CD4-positive, alpha-beta memory T cell (primary cell): ENCODE measurements at regions of chrX and their contacts with region 1.

Region 1: GRCh38 chrX:41781502-41781901 is 57.5 kb downstream of the GPR82 start:
- DNase-seq: peak in 4 of 5 donors; percentile 28 to 38 (median 32)
- H3K4me3 ChIP-seq: no peak overlapping the region
- H3K4me3 Mint-ChIP-seq: no peak overlapping the region
- H3K27ac ChIP-seq: no peak overlapping the region
- H3K27ac Mint-ChIP-seq: peak overlapping the region in 2 of 7 donors; percentile 2 to 7
- H3K4me1 ChIP-seq: peaks cover 12% of the 10 kb centered on the region
- H3K4me1 Mint-ChIP-seq: peaks cover 7 to 10% (median 8%) of the 10 kb centered on the region in 4 donors
- H3K27me3 ChIP-seq: no peaks in the 10 kb centered on the region
- H3K27me3 Mint-ChIP-seq: no peaks in the 10 kb centered on the region

Region 2: GRCh38 chrX:43333543-43333942 is 1552.0 kb after region 1 on chrX:
- CTCF ChIA-PET with region 1: no interaction called
- POLR2A ChIA-PET with region 1: no interaction called
- intact Hi-C with region 1: loop called (anchors 1 kb)
- DNase-seq: peak in 1 of 5 donors; percentile 7
- H3K4me3 ChIP-seq: no peak overlapping the region
- H3K4me3 Mint-ChIP-seq: no peak overlapping the region
- H3K27ac ChIP-seq: no peak overlapping the region
- H3K27ac Mint-ChIP-seq: peak overlapping the region in 1 of 7 donors; percentile 13
- H3K4me1 ChIP-seq: no peaks in the 10 kb centered on the region
- H3K4me1 Mint-ChIP-seq: peaks cover 0 to 2% (median 0%) of the 10 kb centered on the region in 4 donors
- H3K27me3 ChIP-seq: no peaks in the 10 kb centered on the region
- H3K27me3 Mint-ChIP-seq: no peaks in the 10 kb centered on the region

Region 3: DNA sequence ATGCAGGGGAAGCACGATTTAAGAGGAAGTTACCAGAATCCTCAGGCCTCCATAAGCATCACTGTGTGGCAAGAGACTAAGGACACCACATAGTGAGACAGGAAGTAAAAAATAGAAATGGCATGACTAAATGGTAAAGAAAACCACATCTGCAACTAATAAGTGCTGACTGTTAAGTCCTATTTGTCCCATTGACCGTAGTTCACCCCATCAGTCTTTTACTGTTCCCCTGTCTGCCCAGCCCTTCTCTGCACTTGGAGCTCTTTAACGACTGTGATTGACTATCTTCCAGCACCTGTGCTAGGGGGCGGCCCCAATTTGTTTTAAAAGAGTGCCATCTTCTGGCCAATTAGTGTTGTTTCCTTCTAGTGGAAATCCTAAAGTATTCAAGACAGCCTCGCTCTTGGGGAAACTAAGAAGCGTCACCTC is 1968.8 kb after region 1 on chrX:
- CTCF ChIA-PET with region 1: no interaction called
- POLR2A ChIA-PET with region 1: no interaction called
- intact Hi-C with region 1: loop called (anchors 5 kb)
- DNase-seq: peak; percentile 50 to 60 (median 54)
- H3K4me3 ChIP-seq: no peak overlapping the region
- H3K4me3 Mint-ChIP-seq: no peak overlapping the region
- H3K27ac ChIP-seq: no peak overlapping the region
- H3K27ac Mint-ChIP-seq: no peak overlapping the region
- H3K4me1 ChIP-seq: no peaks in the 10 kb centered on the region
- H3K4me1 Mint-ChIP-seq: peaks cover 0 to 5% (median 2%) of the 10 kb centered on the region in 4 donors
- H3K27me3 ChIP-seq: no peaks in the 10 kb centered on the region
- H3K27me3 Mint-ChIP-seq: no peaks in the 10 kb centered on the region